ENCODE measurements at regions of chr6 and their contacts with region 1.

Region 1: GRCh38 chr6:169789982-169790927 is 38.8 kb downstream of the ERMARD start:
- DNase-seq: peak; percentile 72
- H3K4me3 ChIP-seq: peak overlapping the region; percentile 56 to 57 (median 56)
- H3K27ac ChIP-seq: no peak overlapping the region
- H3K4me1 ChIP-seq: peaks cover 17% of the 10 kb centered on the region
- H3K27me3 ChIP-seq: no peaks in the 10 kb centered on the region
- CTCF ChIP-seq: peak; percentile 98 to 99

Region 2: GRCh38 chr6:170529839-170530469 is 739.7 kb after region 1 on chr6:
- CTCF ChIA-PET with region 1: interaction called, 6 read pairs
- dilution Hi-C with region 1: no loop called
- in situ Hi-C with region 1: loop called in 1 of 2 experiments (anchors 10 kb)
- intact Hi-C with region 1: loop called (anchors 1 kb)
- DNase-seq: peak; percentile 48
- H3K4me3 ChIP-seq: no peak overlapping the region
- H3K27ac ChIP-seq: no peak overlapping the region
- H3K4me1 ChIP-seq: no peaks in the 10 kb centered on the region
- H3K27me3 ChIP-seq: no peaks in the 10 kb centered on the region
- CTCF ChIP-seq: peak; percentile 90 to 96

Measured in mammary epithelial cell (primary cell).